A673 (cell line): ENCODE measurements at regions of chr2 and their contacts with region 1.

Region 1: DNA sequence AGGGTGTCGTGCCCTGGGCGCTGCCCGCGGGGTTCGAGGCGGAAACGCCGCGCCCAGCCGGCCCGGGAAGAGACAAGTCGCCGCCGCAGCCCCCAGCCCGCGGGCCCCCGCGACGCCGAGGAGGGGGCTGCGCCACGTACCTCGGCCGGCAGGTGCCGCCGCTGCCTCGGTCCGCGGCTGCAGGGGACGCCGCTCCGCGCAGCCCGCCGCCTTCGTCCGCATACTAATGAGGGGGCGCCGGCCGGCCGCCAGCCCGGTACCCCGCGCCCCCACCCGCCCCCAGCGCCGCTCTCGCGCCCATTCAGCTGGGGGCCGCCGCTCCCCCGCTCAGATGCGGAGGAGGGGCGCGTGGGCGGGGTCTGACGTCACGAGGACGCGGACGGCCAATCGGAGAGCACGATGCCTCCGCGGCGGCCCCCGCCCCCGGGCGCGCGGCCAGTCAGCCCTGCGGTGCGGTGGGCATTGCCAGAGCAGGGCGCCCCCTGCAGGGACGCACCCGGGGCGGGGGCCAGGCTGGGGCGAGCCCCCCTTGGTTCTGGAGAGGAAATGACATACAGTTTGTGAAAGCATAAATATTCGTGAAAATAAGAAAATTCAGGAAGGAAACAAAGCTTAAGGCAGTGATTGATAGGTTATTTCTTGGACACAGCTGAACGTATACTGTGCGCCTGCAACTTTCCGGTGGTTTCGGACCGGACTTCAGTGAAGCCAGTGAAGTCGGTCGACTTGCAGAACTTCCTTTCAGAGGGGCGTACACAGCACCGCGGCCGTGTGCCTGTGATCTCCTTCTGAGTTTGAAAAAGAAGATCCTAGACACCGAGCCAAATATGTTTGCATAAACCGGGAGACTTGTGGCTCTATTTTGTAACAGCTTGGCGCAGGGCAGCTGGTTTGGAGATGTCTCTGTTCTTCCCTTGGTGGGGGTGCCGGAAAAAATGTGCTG is at the start of gene ST3GAL5:
- DNase-seq: peak; percentile 93
- H3K4me3 ChIP-seq: peak within 1 kb of the TSS; percentile 87
- H3K27ac ChIP-seq: peak within 1 kb of the TSS; percentile 85
- H3K4me1 ChIP-seq: peaks cover 29% of the 10 kb centered on the region
- H3K27me3 ChIP-seq: no peaks in the 10 kb centered on the region
- CTCF ChIP-seq: peak; percentile 76
- total RNA-seq, gene ST3GAL5: 25.3 and 27.1 TPM in 2 replicates

Region 2: DNA sequence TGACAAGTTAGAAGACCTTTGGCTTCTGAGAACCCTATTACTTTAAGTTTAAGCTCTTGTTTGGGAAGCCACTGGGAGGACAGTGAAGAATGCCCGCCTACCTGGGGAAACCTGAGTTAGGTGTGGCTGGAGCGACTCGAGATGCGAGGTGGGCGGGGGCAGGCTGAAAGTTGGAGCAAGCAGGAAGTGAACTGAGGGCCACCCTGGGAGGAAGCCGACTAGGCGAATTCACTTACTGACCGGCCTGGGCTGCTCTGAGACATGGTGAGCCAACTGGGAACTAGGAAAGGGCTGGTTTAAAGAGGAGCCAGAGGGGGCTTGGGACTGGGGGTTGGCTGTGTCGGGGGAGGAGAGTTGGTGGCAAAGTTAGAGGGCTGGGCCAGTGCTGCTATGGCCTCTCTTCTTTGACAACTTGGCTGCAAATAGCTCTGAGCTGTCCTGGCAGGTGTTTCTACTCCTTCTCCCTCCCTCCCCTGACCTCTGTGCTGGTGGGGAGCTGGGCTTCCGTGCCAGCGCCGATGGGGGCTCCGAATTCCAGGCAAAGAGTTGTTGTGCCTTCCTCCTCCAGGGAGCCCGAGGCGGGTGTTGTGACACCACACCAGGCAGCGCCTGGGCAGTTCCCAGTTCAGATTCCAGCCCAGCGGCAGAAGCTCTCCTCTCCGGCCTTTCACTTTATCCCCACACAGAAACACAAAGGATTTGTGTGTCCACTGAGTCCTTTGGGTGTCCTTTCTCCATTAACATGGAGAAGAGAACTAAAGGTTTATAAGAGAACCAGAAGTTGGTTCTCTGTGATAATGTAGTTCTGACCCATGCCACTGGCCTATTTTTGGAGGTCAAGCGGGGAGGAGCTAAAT is 311.3 kb before region 1 on chr2 and contains the start of gene VAMP8:
- CTCF ChIA-PET with region 1: no interaction called
- POLR2A ChIA-PET with region 1: no interaction called
- intact Hi-C with region 1: no loop called
- DNase-seq: no peak
- H3K4me3 ChIP-seq: no peak within 1 kb of the TSS
- H3K27ac ChIP-seq: no peak within 1 kb of the TSS
- H3K4me1 ChIP-seq: no peaks in the 10 kb centered on the region
- H3K27me3 ChIP-seq: no peaks in the 10 kb centered on the region
- CTCF ChIP-seq: no peak
- total RNA-seq, gene VAMP8: not detected in 2 replicates

Region 3: DNA sequence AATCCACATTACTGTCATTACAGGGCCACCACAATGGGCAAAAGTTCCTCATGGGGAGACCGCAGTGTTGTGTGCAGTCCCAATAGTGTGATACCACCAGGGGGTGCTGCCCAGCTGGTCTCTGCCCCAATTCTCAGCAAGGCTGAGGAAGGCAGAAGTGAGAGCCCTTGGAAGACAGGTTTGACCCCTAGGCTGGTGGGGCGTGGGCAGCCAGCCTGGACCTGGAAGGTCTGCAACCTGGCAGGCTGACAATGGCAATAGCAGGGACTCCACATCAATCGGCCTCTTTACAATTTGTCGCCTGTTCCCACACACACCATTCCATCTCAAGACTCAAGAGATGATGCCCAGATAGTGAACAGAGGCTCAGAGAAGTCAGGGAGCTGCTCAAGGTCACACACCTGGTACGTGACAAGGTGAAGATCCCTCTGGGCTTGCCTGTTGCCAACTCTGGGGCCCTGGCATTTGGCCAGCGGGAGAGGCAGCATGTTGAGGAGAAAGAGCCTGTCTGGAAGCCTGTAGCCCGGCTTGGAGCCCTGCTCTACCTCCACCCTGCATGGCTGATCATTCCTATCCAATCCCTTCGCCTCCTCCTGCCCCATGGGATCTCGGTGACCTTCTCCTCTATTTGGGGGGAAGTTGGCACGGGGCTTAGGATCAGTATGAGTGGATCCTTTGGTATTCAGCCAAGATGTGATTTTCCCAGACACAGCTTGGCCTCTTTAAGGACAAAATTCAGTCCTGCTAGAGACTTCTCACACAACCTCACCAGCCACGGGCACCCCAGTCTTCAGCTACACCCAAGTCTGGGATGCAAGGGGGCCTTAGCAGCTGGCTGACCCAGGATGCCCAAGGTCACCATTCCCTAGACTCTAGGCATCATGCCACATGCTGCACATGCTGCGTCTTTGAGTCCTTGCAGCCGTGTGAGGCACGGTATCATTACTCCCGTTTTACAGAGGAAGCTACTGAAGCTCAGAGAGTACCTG is 138.1 kb before region 1 on chr2:
- CTCF ChIA-PET with region 1: no interaction called
- POLR2A ChIA-PET with region 1: no interaction called
- intact Hi-C with region 1: loop called (anchors 5 kb)
- DNase-seq: peak; percentile 68
- H3K4me3 ChIP-seq: no peak overlapping the region
- H3K27ac ChIP-seq: no peak overlapping the region
- H3K4me1 ChIP-seq: peaks cover 29% of the 10 kb centered on the region
- H3K27me3 ChIP-seq: no peaks in the 10 kb centered on the region
- CTCF ChIP-seq: peak; percentile 93

Region 4: GRCh38 chr2:85971366-85971765 is 82.4 kb after region 1 on chr2:
- CTCF ChIA-PET with region 1: no interaction called
- POLR2A ChIA-PET with region 1: no interaction called
- intact Hi-C with region 1: no loop called
- DNase-seq: no peak
- H3K4me3 ChIP-seq: no peak overlapping the region
- H3K27ac ChIP-seq: no peak overlapping the region
- H3K4me1 ChIP-seq: no peaks in the 10 kb centered on the region
- H3K27me3 ChIP-seq: no peaks in the 10 kb centered on the region
- CTCF ChIP-seq: no peak

Region 5: DNA sequence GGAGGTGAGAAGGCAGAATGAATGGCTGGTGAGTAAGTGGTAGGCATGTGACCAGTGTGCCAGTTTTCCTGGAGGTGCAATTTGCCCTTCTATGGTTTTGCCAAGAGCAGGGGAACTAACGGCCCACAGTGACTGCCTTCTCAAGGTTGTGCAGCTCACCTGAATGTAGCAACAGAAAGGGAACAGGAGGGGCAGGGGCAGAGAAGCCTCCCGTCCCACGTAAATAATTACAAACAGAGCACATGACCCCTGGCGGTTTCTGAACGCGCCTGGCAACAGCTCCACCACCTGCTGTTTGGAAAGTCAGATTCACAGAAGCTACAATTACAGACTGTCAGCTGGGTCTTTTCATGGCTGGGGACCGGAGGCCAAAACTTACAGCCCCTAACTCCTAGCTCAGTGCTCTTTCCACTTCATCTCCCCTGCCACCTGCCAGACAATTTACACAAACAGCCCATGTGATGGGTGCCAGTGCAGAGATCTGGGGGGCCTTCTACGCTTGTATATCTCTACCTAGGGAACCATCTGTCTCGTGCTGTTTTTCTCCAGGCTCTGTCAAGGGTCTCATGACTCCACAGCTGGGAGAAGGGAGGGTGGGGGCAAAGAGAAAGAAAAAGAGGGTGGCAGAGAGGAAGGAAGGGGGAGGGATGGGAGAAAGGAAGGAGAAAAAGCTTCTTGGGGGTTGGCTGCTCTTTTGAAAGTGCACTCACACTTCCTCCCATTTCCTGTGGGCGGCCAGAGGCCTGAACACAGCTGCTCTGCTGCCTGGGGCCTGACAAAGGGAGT is 147.1 kb after region 1 on chr2:
- CTCF ChIA-PET with region 1: no interaction called
- POLR2A ChIA-PET with region 1: no interaction called
- intact Hi-C with region 1: loop called (anchors 2 kb)
- DNase-seq: peak; percentile 85
- H3K4me3 ChIP-seq: peak overlapping the region; percentile 5
- H3K27ac ChIP-seq: peak overlapping the region; percentile 77
- H3K4me1 ChIP-seq: peaks cover 25% of the 10 kb centered on the region
- H3K27me3 ChIP-seq: no peaks in the 10 kb centered on the region
- CTCF ChIP-seq: peak; percentile 46

Region 6: DNA sequence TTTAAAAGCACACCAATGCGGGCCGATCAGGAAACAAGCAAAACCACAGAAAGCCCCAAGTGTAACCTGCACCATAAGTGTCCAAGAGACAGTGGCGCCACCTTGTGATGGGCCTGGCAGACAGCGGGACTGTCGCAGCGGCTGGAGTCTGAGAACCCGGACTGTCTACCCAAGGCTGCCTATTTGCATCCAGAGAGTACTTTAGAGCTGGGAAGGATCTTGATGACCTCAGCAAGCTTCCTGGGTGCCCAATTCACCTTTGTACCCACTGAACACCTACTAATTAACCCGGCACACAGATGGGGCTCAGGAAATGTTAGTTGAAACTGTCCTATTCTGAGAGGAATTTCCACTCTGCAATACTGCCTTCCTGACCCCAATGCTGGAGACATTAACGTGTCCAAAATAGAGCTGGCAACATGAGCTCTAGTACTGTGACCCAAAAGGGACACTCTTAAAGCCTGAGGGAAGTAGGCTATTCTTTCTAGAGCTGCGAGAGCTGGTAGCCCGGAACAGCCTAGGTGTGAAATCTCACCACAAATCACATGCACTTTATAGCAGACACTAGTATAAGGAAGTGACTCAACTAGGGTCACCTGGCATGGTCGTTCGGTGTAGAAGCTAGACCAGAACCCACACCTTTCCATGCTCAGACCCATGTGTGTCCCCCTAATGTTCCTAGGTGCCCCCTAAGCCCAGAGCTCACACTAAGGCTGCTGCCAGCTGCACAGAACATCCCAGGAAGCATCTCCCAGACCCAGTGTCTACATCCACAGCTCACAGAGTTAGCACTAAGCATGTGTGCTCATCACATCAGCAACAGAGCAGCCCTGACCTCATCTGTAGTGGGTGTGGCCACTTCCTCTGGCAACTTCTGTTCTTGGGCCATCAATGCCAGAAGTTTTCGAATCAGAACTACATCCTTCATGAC is 191.3 kb after region 1 on chr2:
- CTCF ChIA-PET with region 1: interaction called, 8 read pairs
- POLR2A ChIA-PET with region 1: no interaction called
- intact Hi-C with region 1: loop called (anchors 5 kb)
- DNase-seq: peak; percentile 78
- H3K4me3 ChIP-seq: no peak overlapping the region
- H3K27ac ChIP-seq: no peak overlapping the region
- H3K4me1 ChIP-seq: no peaks in the 10 kb centered on the region
- H3K27me3 ChIP-seq: no peaks in the 10 kb centered on the region
- CTCF ChIP-seq: peak; percentile 92

Region 7: GRCh38 chr2:86552889-86553288 is 663.9 kb after region 1 on chr2:
- CTCF ChIA-PET with region 1: no interaction called
- POLR2A ChIA-PET with region 1: no interaction called
- intact Hi-C with region 1: no loop called
- DNase-seq: no peak
- H3K4me3 ChIP-seq: no peak overlapping the region
- H3K27ac ChIP-seq: no peak overlapping the region
- H3K4me1 ChIP-seq: no peaks in the 10 kb centered on the region
- H3K27me3 ChIP-seq: no peaks in the 10 kb centered on the region
- CTCF ChIP-seq: no peak